MCF 10A (cell line): ENCODE measurements at regions of chr11 and their contacts with region 1.

Region 1: GRCh38 chr11:62805076-62805892 is at the start of gene NXF1:
- DNase-seq: peak; percentile 93
- H3K4me3 Mint-ChIP-seq: peak within 1 kb of the TSS; percentile 95
- H3K27ac Mint-ChIP-seq: peak within 1 kb of the TSS; percentile 99
- H3K4me1 Mint-ChIP-seq: peaks cover 20% of the 10 kb centered on the region
- H3K27me3 Mint-ChIP-seq: no peaks in the 10 kb centered on the region
- CTCF ChIP-seq: no peak
- total RNA-seq, gene NXF1: 47.6 and 53.3 TPM in 2 replicates

Region 2: DNA sequence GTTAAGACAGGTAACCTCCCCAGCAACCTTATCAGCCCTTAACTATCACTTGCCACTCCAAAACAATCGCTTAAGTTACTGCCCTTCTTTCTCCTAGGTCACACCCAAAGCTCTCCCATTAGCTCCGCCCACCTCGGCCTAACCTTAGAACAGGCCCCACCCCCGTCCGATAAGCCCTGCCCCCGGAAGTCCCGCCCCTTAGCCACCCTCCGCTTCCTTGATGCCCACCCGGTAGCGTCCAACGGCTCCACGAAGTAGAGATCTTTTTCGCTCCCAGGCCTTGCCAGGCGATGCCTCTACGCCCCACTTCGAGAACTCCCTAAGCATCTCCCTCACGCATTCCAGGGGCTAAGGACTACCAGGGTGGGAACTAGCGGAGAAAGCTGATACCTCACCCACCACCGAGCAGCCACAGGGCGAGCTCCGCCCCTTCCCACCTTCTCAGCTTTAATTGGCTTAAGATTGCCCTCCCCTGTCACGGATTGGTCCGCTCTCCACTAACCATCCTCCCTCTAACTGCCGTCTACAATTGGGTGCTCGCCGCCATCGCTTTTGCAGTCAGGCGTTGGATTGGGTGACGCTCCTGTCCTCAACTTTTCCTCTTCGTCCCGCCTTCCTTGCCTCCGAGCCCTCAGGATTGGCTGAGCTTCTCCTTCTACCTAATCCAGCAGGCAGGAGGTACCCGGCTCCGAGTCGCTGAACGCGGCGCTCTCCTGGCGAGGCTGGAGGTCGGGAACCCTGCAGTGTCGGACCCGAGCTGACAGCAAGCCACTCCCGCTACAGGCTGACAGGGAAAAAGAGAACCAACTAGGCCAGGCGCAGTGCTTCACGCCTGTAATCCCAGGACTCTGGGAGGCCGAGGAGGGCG is 51.3 kb before region 1 on chr11 and contains the start of gene ZBTB3:
- CTCF ChIA-PET with region 1: no interaction called
- POLR2A ChIA-PET with region 1: interaction called, 14 read pairs
- intact Hi-C with region 1: no loop called
- DNase-seq: peak; percentile 100
- H3K4me3 Mint-ChIP-seq: peak within 1 kb of the TSS; percentile 98
- H3K27ac Mint-ChIP-seq: peak within 1 kb of the TSS; percentile 96
- H3K4me1 Mint-ChIP-seq: peaks cover 3% of the 10 kb centered on the region
- H3K27me3 Mint-ChIP-seq: no peaks in the 10 kb centered on the region
- CTCF ChIP-seq: no peak
- total RNA-seq, gene ZBTB3: 7.1 and 11.6 TPM in 2 replicates

Region 3: DNA sequence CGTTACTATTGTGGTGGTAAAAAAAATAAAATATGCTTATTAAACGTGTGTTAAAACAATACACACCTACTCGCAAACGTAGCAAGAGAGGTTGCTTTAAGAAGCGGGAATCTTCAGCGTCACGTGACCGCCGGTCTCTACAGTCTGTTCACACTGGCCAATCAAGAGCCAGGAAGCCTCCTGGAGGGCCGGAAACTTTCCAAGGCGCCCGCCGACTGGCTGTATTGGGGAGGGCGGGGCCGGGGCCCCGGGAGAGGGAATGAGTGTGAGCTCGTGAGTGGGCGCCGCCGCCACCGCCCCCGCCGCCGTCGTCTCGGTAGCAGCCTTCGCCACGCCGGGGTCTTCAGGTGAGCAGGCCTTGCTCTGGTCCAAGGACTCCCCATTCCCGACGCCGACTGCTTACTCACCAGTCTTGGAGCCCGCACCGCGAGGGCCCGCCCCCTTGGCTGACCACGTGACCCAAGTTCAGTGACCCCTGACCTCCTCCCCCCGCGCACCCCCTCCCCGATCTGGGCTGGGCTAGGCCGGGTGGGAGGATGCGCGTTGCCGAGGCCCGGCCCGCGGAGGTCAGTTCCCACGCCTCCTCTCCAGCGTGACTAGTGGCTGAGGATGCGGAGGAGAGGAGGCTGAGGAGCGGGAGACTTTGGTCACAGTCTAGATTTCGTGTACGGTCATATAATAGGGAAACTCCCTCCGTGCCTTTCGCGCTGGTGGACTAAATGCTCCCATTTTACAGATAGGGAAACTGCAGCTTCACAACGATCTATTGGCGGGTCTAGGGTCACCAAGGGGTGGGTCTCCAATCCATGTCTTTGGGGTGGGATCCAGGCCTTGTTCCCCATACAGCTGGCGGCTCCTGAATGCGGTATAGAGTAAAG is 33.9 kb before region 1 on chr11 and contains the start of gene TAF6L:
- CTCF ChIA-PET with region 1: no interaction called
- POLR2A ChIA-PET with region 1: interaction called, 10 read pairs
- intact Hi-C with region 1: no loop called
- DNase-seq: peak; percentile 98
- H3K4me3 Mint-ChIP-seq: peak within 1 kb of the TSS; percentile 98
- H3K27ac Mint-ChIP-seq: peak within 1 kb of the TSS; percentile 95
- H3K4me1 Mint-ChIP-seq: peaks cover 5% of the 10 kb centered on the region
- H3K27me3 Mint-ChIP-seq: no peaks in the 10 kb centered on the region
- CTCF ChIP-seq: no peak
- total RNA-seq, gene TAF6L: 11.6 and 12.0 TPM in 2 replicates

Region 4: DNA sequence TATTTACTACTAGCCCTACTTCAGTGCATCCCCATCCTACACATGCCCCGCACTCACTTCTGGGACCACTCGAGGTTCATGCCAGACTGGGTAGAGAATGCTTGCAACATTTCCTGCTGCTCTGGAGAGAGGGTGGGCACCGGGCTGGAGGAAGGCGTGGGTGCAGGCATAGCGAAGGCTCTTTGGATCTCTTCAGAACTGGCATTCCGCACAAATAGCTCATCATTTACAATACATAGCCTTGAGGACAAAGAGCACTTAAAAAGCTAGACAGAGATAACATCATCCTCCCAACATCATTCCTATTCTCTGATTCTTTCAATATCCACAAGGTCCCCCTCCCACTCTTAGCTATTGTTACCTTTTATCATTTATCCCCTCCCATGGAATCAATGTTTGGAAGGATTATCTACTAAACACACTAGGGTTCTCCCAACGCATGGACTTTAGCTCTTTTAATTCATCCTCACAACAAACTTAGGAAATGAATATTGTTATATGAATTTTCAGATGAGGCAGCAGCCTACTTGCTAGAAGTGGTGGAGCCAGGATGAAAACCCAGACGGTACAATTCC is 11.0 kb before region 1 on chr11:
- CTCF ChIA-PET with region 1: interaction called, 8 read pairs
- POLR2A ChIA-PET with region 1: interaction called, 163 read pairs
- intact Hi-C with region 1: no loop called
- DNase-seq: no peak
- H3K4me3 Mint-ChIP-seq: no peak overlapping the region
- H3K27ac Mint-ChIP-seq: no peak overlapping the region
- H3K4me1 Mint-ChIP-seq: peaks cover 9% of the 10 kb centered on the region
- H3K27me3 Mint-ChIP-seq: no peaks in the 10 kb centered on the region
- CTCF ChIP-seq: no peak

Region 5: GRCh38 chr11:62816557-62816956 is 11.3 kb after region 1 on chr11:
- CTCF ChIA-PET with region 1: interaction called, 6 read pairs
- POLR2A ChIA-PET with region 1: interaction called, 21 read pairs
- intact Hi-C with region 1: no loop called
- DNase-seq: no peak
- H3K4me3 Mint-ChIP-seq: no peak overlapping the region
- H3K27ac Mint-ChIP-seq: no peak overlapping the region
- H3K4me1 Mint-ChIP-seq: no peaks in the 10 kb centered on the region
- H3K27me3 Mint-ChIP-seq: no peaks in the 10 kb centered on the region
- CTCF ChIP-seq: no peak

Region 6: DNA sequence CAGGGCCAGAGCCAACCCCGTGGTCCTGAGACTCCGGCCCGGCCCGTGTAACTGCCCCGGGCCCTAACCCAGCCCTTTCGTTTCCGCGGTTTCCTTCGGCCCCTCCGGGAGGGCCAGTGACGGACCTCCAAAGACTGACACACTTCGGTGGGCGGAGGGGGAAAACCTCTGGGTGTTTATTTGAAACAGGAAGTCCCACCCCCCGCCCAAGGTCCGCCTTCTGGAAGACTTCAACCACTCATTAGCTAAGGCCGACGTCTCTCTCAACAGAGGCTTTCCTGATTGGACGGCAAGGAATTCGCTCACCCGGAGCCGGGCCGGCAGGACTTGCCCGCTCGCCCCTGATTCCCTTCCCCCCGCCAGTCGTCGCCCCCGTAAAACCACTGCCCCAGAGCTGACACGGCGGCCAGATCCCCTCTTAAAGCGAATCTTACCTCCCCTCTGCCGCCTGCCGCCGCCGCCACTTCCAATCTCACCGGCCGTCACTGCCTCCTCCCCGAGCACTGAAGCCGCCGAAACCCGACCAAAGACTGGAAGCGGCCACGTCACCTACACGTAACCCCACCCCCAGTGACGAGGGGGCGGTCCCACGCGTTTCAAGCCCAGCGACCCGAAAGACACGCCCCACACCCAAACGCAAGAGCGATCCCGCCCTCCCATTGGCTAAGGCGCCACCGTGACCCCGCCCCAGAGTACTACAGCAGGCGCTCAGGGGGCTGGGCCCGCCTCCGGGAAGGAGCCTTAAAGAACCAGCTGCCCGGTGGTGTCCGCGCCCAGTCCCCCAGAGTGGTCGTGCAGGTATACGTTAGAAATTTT is 26.4 kb after region 1 on chr11 and contains the start of gene STX5:
- CTCF ChIA-PET with region 1: interaction called, 8 read pairs
- POLR2A ChIA-PET with region 1: interaction called, 55 read pairs
- intact Hi-C with region 1: loop called (anchors 2 kb)
- DNase-seq: peak; percentile 98
- H3K4me3 Mint-ChIP-seq: peak within 1 kb of the TSS; percentile 89
- H3K27ac Mint-ChIP-seq: peak within 1 kb of the TSS; percentile 99
- H3K4me1 Mint-ChIP-seq: peaks cover 31% of the 10 kb centered on the region
- H3K27me3 Mint-ChIP-seq: no peaks in the 10 kb centered on the region
- CTCF ChIP-seq: no peak
- total RNA-seq, gene STX5: 71.8 and 72.0 TPM in 2 replicates

Region 7: DNA sequence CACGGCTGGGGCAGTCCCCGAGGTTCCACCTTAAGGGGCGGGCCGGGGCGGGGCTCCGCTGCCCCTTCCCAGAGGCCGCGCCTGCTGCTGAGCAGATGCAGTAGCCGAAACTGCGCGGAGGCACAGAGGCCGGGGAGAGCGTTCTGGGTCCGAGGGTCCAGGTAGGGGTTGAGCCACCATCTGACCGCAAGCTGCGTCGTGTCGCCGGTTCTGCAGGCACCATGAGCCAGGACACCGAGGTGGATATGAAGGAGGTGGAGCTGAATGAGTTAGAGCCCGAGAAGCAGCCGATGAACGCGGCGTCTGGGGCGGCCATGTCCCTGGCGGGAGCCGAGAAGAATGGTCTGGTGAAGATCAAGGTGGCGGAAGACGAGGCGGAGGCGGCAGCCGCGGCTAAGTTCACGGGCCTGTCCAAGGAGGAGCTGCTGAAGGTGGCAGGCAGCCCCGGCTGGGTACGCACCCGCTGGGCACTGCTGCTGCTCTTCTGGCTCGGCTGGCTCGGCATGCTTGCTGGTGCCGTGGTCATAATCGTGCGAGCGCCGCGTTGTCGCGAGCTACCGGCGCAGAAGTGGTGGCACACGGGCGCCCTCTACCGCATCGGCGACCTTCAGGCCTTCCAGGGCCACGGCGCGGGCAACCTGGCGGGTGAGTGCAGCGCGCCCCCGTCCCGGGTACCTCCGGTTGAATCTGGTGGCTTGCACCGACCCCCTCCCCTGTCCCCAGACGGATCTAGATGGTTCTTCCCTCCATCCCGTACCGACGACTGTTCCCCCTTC is 75.7 kb after region 1 on chr11 and contains the start of gene SLC3A2:
- CTCF ChIA-PET with region 1: interaction called, 4 read pairs
- POLR2A ChIA-PET with region 1: interaction called, 16 read pairs
- intact Hi-C with region 1: no loop called
- DNase-seq: peak; percentile 91
- H3K4me3 Mint-ChIP-seq: peak within 1 kb of the TSS; percentile 100
- H3K27ac Mint-ChIP-seq: peak within 1 kb of the TSS; percentile 99
- H3K4me1 Mint-ChIP-seq: peaks cover 47% of the 10 kb centered on the region
- H3K27me3 Mint-ChIP-seq: no peaks in the 10 kb centered on the region
- CTCF ChIP-seq: peak; percentile 70
- total RNA-seq, gene SLC3A2: 838 and 896 TPM in 2 replicates

Region 8: DNA sequence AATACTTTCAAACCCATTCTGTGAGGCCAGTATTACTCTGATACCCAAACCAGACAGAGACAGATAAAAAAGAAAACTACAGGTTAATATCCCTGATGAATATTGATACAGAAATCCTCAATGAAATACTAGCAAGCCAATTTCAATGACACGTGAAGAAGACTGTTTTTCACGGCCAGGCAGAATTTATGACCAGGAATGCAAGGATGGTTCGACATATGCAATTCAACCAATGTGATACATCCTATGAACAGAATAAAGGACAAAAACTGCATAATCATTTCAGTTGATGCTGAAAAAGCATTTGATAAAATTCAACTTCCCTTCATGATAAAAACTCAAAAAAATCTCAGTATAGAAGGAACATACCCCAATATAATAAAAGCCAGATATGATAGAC is 294.3 kb after region 1 on chr11:
- CTCF ChIA-PET with region 1: no interaction called
- POLR2A ChIA-PET with region 1: no interaction called
- intact Hi-C with region 1: no loop called
- DNase-seq: no peak
- H3K4me3 Mint-ChIP-seq: no peak overlapping the region
- H3K27ac Mint-ChIP-seq: no peak overlapping the region
- H3K4me1 Mint-ChIP-seq: no peaks in the 10 kb centered on the region
- H3K27me3 Mint-ChIP-seq: no peaks in the 10 kb centered on the region
- CTCF ChIP-seq: no peak

Region 9: GRCh38 chr11:63179432-63180041 is 374.3 kb after region 1 on chr11:
- CTCF ChIA-PET with region 1: no interaction called
- POLR2A ChIA-PET with region 1: no interaction called
- intact Hi-C with region 1: no loop called
- DNase-seq: no peak
- H3K4me3 Mint-ChIP-seq: no peak overlapping the region
- H3K27ac Mint-ChIP-seq: no peak overlapping the region
- H3K4me1 Mint-ChIP-seq: no peaks in the 10 kb centered on the region
- H3K27me3 Mint-ChIP-seq: peaks cover 22% of the 10 kb centered on the region
- CTCF ChIP-seq: no peak